ENCODE measurements at regions of chr12 and their contacts with region 1.

Region 1: GRCh38 chr12:124906606-124907261 is 7.7 kb downstream of the UBC start:
- DNase-seq: peak; percentile 95
- H3K4me3 ChIP-seq: no peak overlapping the region
- H3K27ac ChIP-seq: peak overlapping the region; percentile 35 to 69 (median 61)
- H3K4me1 ChIP-seq: peaks cover 0 to 55% (median 42%) of the 10 kb centered on the region in 4 donors
- H3K27me3 ChIP-seq: no peaks in the 10 kb centered on the region
- CTCF ChIP-seq: peak; percentile 96 to 99 (median 98)
- EP300 ChIP-seq: no peak
- POLR2A ChIP-seq: no peak

Region 2: GRCh38 chr12:124036674-124037109 is 870.0 kb before region 1 on chr12:
- intact Hi-C with region 1: loop called (anchors 5 kb)
- DNase-seq: no peak
- H3K4me3 ChIP-seq: no peak overlapping the region
- H3K27ac ChIP-seq: no peak overlapping the region
- H3K4me1 ChIP-seq: peaks cover 0 to 6% (median 0%) of the 10 kb centered on the region in 4 donors
- H3K27me3 ChIP-seq: no peaks in the 10 kb centered on the region
- CTCF ChIP-seq: peak; percentile 39 to 90 (median 89)
- EP300 ChIP-seq: no peak
- POLR2A ChIP-seq: no peak

Region 3: GRCh38 chr12:124754949-124755800 is 151.6 kb before region 1 on chr12:
- intact Hi-C with region 1: no loop called
- DNase-seq: peak; percentile 98
- H3K4me3 ChIP-seq: no peak overlapping the region
- H3K27ac ChIP-seq: peak overlapping the region; percentile 87 to 97 (median 93)
- H3K4me1 ChIP-seq: peaks cover 0 to 74% (median 54%) of the 10 kb centered on the region in 4 donors
- H3K27me3 ChIP-seq: no peaks in the 10 kb centered on the region
- CTCF ChIP-seq: no peak
- EP300 ChIP-seq: peak in 3 of 4 donors; percentile 92 to 97 (median 96)
- POLR2A ChIP-seq: peak in 1 of 2 donors; percentile 34

Region 4: DNA sequence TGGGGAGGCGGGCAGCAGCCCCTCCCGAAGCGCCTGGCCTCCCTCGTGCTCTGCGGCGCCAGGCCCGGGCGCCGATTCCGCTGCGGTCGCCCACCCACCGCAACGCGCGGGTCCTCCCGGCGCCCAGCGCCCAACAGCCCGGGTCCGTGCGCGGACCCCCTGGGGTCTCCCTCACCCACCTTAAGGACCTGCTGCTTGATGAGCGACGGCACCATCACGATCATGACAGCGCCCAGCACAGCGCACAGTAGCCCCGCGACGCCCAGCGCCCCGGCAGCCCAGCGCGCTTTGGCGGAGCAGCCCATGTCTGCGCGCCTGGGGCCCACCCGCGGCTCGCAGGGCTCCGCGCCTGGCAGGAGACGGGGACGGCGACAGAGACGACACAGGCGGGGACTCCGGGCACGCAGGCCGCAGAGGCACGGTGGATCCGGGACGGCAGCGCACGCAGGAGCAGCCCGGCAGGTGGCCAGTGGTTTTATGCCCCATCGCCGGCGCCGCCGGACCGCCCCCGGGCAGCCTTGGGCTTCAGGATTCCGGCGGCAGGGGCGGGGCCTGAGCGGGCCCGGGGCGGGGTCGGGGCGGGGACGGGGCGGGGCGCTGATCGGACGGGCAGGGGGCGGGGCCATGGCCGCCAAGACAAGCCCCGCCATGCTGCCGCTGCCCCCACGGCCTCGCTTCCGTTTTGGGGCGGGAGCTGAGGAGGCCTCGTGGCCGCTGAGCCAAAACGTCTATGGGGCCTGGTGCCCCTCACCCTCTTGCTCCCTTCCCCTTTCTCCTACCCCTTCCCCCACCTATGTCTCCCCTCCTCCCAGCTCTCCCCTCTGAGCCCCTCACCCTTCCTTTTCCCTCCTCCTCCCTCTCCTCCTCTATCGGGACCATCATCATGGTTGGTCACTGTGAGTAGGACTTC is 43.1 kb before region 1 on chr12 and contains the start of gene SCARB1:
- intact Hi-C with region 1: loop called (anchors 5 kb)
- DNase-seq: peak; percentile 89
- H3K4me3 ChIP-seq: peak within 1 kb of the TSS; percentile 57 to 86 (median 74)
- H3K27ac ChIP-seq: peak within 1 kb of the TSS; percentile 55 to 77 (median 63)
- H3K4me1 ChIP-seq: peaks cover 0 to 29% (median 20%) of the 10 kb centered on the region in 4 donors
- H3K27me3 ChIP-seq: no peaks in the 10 kb centered on the region
- CTCF ChIP-seq: no peak
- EP300 ChIP-seq: no peak
- POLR2A ChIP-seq: no peak
- total RNA-seq, gene SCARB1: 5.7 to 12.8 (median 10.8) TPM

Region 5: GRCh38 chr12:124940549-124941527 is 34.1 kb after region 1 on chr12:
- intact Hi-C with region 1: loop called (anchors 1 kb)
- DNase-seq: peak; percentile 96
- H3K4me3 ChIP-seq: peak overlapping the region in 3 of 4 donors; percentile 46 to 51 (median 49)
- H3K27ac ChIP-seq: peak overlapping the region; percentile 84 to 96 (median 87)
- H3K4me1 ChIP-seq: peaks cover 0 to 30% (median 26%) of the 10 kb centered on the region in 4 donors
- H3K27me3 ChIP-seq: no peaks in the 10 kb centered on the region
- CTCF ChIP-seq: peak; percentile 90 to 97 (median 95)
- EP300 ChIP-seq: no peak
- POLR2A ChIP-seq: no peak

Region 6: DNA sequence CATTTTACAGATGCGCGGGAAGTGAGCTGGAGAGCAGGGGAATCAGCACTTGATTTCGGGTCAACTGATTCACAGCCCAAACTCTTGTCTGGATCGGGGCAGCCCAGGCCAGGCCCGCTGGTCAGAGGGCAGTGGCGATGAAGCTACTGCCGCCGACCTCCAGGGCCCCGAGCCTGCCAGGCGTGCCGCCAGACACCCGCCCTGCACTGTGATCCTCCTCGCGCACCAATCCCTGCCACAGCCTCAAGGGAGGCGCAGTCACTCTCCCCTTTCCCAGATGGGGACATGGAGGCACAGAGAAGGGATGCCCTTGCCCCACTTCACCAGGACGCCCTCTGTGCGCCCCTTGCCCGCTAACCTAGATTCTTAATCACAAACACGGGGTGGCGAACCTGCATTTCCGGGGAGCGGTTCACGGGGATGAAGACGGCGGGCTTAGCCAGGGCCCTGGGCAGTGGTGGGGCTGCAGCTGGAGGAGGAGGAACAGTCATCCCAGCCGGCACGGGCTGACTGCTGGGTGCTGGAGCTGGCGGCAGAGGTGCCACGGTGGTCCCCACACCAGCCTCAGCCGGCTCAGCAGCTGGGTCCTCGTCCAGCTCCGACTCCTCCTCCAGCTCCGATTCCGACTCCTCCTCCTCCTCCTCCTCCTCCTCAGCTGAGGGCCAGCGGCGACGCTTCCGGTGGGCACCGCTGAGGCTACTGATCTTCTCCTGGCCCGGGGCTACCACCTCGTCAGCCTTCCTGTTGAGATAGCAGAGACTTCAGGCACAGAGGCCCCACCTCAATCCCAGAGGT is 73.6 kb after region 1 on chr12:
- intact Hi-C with region 1: loop called (anchors 10 kb)
- DNase-seq: no peak
- H3K4me3 ChIP-seq: no peak overlapping the region
- H3K27ac ChIP-seq: no peak overlapping the region
- H3K4me1 ChIP-seq: no peaks in the 10 kb centered on the region
- H3K27me3 ChIP-seq: no peaks in the 10 kb centered on the region
- CTCF ChIP-seq: no peak
- EP300 ChIP-seq: no peak
- POLR2A ChIP-seq: no peak